Pancreas (tissue), 10 donors: ENCODE measurements at regions of chr15 and their contacts with region 1.

Region 1: DNA sequence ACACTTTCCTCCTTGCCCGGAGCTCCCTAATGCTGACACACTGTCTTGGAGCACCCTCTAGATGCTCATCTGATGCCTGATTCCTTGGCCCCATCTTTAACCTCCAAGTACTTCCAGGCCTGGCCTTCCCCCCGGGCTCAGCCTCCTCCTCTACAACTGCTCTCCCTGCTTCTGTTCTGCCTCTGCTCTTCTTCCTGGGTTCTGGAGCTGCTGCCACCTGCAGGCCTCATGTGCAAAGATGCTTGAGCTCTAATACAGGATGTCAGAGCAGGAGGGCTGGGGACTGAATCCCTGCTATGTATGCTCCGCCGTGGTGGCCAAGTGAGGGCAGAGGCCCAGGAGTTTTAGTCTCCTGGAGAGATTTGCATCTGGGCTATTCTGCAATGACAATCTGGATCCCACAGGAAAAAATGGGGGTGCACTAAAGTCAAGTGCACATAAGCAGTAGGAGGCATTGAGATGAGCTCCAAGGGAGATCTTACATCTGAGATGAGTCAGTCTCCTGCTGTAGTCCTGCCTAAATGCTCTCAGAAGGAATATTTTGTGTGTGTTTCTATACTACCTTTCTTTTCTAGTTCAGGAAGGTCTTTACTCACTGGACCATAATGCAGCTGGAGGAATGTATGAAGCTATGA is 296.3 kb downstream of the UACA start:
- DNase-seq: peak in 3 of 6 donors; percentile 25 to 51 (median 38)
- ATAC-seq: peak; percentile 48 to 82 (median 78)
- H3K4me3 ChIP-seq: no peak overlapping the region
- H3K27ac ChIP-seq: no peak overlapping the region
- H3K4me1 ChIP-seq: no peaks in the 10 kb centered on the region
- H3K27me3 ChIP-seq: no peaks in the 10 kb centered on the region
- CTCF ChIP-seq: peak; percentile 11 to 34 (median 24)

Region 2: GRCh38 chr15:69576035-69576526 is 890.9 kb before region 1 on chr15:
- intact Hi-C with region 1: loop called in 1 of 3 experiments (anchors 10 kb)
- DNase-seq: peak; percentile 59 to 86 (median 75)
- ATAC-seq: peak; percentile 72 to 89 (median 82)
- H3K4me3 ChIP-seq: no peak overlapping the region
- H3K27ac ChIP-seq: no peak overlapping the region
- H3K4me1 ChIP-seq: peaks cover 23 to 37% (median 31%) of the 10 kb centered on the region in 3 donors
- H3K27me3 ChIP-seq: no peaks in the 10 kb centered on the region
- CTCF ChIP-seq: peak; percentile 50 to 83 (median 76)

Region 3: DNA sequence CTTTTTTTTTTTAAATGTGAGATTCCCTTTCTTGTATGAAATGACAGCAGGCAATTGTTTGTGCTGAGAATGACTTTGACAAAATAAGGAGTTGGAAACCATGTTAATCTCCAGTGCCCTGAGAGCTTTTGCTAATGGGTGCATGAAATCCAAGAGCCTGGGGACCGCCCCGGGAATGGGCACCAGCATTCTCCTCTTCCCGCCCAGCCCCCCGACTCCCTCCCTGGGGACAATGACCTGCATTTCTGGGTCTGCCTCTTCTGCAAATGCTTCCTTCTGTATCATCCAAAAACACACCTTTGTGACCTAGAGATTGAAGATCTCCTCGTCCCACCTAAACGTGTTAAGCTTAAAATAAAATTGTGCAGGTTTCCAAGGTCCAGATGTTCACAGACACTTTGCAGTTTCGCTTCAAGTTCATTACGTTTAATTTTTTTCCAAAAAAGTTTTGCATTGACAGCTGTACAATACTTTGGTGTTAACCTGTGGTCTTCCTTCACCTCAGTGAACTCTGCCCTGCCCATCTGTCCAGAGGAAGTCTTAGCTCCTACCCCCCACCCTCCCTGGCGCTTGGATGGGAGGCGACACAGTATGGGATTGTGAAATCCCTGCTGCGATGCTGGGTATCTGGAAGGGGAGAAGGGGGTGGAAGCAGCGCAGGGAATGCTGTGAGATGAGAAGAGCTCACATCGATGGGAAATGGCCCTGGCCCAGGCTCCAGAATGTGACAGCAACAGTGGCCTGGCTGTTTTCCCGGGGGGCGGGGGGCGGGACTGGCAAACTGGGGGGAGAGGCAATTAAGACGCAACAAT is 419.4 kb before region 1 on chr15:
- intact Hi-C with region 1: no loop called
- DNase-seq: peak in 1 of 6 donors; percentile 43
- ATAC-seq: peak in 3 of 4 donors; percentile 19 to 30 (median 19)
- H3K4me3 ChIP-seq: no peak overlapping the region
- H3K27ac ChIP-seq: no peak overlapping the region
- H3K4me1 ChIP-seq: no peaks in the 10 kb centered on the region
- H3K27me3 ChIP-seq: no peaks in the 10 kb centered on the region
- CTCF ChIP-seq: no peak

Region 4: DNA sequence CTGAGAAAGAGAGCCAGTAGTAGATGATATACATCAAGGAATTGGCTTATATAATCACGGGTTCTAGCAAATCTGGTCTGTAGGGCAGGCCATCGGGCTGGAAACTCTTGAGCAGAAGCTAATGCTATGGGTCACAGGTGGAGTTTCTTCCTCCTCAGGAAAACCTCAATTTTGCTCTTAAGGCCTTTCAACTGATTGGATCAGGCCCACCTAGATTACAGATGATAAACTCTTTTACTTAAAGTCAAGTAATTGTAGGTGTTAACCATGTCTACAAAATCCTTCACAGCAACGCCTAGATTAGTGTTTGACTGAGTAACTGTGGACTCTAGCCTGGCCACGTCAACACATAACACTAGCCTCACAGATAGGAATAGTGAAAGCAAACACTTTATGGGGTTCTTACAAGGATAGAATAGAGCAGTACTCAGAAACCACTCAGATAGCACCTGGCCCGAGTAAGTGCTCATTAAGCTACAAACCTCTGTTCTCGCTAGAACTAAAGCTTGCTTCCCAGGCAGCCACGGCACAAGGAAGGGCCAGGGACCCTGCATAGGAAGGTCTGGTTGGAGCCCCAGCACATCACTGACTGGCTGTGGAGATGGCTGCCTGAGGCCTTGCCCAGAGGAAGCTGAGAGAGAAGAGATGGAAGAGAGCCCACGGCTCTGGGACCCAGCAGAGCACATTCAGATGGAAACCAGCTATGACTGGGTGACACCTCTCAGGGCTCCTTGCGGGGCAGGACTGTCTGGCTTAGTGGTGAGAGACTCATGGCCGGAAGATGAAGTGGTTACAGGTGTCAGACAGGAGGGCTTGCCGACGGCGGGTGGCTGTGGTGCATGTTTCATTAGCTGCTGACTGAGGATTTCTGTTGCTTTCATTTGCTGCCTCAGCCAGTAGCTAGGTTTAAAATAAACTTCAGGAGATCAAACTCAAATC is 166.8 kb before region 1 on chr15:
- intact Hi-C with region 1: no loop called
- DNase-seq: no peak
- ATAC-seq: peak in 3 of 4 donors; percentile 22 to 48 (median 27)
- H3K4me3 ChIP-seq: no peak overlapping the region
- H3K27ac ChIP-seq: no peak overlapping the region
- H3K4me1 ChIP-seq: no peaks in the 10 kb centered on the region
- H3K27me3 ChIP-seq: no peaks in the 10 kb centered on the region
- CTCF ChIP-seq: no peak

Region 5: GRCh38 chr15:70311821-70312220 is 155.2 kb before region 1 on chr15:
- intact Hi-C with region 1: no loop called
- DNase-seq: no peak
- ATAC-seq: no peak
- H3K4me3 ChIP-seq: no peak overlapping the region
- H3K27ac ChIP-seq: no peak overlapping the region
- H3K4me1 ChIP-seq: peaks cover 0 to 4% (median 0%) of the 10 kb centered on the region in 3 donors
- H3K27me3 ChIP-seq: no peaks in the 10 kb centered on the region
- CTCF ChIP-seq: no peak